ENCODE measurements at regions of chr10 and their contacts with region 1.

Region 1: DNA sequence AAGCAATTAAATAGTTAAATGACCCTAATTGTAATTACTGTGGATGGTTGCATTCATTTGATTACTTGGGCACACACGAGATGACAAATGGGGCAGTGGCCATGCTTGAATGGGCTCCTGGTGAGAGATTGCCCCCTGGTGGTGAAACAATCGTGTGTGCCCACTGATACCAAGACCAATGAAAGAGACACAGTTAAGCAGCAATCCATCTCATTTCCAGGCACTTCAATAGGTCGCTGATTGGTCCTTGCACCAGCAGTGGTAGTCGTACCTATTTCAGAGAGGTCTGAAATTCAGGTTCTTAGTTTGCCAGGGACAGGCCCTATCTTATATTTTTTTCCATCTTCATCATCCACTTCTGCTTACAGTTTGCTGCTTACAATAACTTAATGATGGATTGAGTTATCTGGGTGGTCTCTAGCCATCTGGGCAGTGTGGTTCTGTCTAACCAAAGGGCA is 8.3 kb downstream of the PCBD1 start:
- DNase-seq: peak; percentile 86
- H3K4me3 Mint-ChIP-seq: no peak overlapping the region
- H3K27ac Mint-ChIP-seq: no peak overlapping the region
- H3K4me1 Mint-ChIP-seq: no peaks in the 10 kb centered on the region
- H3K27me3 Mint-ChIP-seq: no peaks in the 10 kb centered on the region
- CTCF ChIP-seq: peak; percentile 94

Region 2: DNA sequence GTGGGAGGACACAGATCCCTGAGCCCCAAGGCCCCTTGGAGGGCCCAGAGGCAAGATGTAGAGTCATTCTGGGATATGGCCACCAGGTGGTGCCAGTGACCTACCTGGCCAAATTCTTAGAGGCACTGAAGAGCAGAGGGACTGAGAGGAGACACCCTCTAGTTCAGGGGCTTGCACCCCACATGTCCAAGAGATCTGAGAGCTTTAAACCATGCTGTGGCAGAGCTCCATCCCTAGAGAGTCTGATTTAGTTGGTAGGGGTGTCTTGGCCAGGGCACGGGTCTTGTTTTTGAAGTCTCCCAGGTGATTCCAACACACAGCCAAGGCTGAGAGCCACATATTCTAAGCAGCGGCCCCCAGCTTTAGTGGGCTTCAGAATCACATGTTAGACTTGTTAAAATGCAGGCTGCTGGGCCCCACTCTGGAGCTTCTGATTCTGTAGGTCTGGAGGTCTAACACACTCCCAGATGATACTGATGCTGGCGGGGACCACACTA is 330.1 kb before region 1 on chr10:
- CTCF ChIA-PET with region 1: no interaction called
- intact Hi-C with region 1: loop called (anchors 2 kb)
- DNase-seq: peak; percentile 81
- H3K4me3 Mint-ChIP-seq: no peak overlapping the region
- H3K27ac Mint-ChIP-seq: no peak overlapping the region
- H3K4me1 Mint-ChIP-seq: no peaks in the 10 kb centered on the region
- H3K27me3 Mint-ChIP-seq: peaks cover 31% of the 10 kb centered on the region
- CTCF ChIP-seq: peak; percentile 92

Region 3: DNA sequence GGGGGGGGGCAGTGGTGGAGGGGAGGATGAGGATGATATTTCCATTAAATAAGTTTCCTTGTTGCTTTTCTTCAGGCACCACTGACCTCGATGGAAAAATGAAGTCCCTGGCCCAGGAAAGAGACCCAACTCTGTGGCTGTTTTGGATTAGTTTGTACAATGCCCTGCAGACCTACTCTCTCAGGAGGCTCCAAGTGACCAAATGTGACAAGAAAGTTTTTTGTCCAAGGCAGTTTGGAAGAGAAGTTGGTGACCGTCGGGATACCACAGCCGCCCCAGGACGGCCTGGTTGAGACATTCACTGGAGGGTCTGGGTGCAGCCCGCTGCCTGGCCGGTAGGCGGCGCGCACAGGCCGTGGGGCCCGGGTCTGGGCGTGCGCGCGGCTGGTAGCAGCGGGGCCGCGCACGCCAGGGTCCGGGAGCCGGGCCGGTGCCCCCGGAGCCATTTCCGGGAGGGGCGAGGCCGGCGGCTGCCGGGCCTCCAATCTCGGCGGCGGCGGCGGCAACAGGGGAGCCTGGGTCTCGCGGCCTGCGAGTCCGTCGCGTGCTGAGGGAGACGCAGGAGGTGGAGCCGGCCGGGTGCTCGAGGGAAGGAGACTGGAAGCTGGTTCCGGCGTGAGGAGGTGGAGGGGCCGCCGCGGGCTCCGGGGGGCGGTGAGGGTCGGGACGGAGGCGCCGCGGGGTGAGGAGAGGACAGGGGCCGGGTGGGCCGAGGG is 64.4 kb before region 1 on chr10 and contains the start of gene SGPL1:
- CTCF ChIA-PET with region 1: no interaction called
- intact Hi-C with region 1: loop called (anchors 1 kb)
- DNase-seq: peak; percentile 96
- H3K4me3 Mint-ChIP-seq: peak within 1 kb of the TSS; percentile 84
- H3K27ac Mint-ChIP-seq: peak within 1 kb of the TSS; percentile 75
- H3K4me1 Mint-ChIP-seq: peaks cover 8% of the 10 kb centered on the region
- H3K27me3 Mint-ChIP-seq: peaks cover 27% of the 10 kb centered on the region
- CTCF ChIP-seq: peak; percentile 99
- total RNA-seq, gene SGPL1: 75.8 and 84.6 TPM in 2 replicates

Region 4: DNA sequence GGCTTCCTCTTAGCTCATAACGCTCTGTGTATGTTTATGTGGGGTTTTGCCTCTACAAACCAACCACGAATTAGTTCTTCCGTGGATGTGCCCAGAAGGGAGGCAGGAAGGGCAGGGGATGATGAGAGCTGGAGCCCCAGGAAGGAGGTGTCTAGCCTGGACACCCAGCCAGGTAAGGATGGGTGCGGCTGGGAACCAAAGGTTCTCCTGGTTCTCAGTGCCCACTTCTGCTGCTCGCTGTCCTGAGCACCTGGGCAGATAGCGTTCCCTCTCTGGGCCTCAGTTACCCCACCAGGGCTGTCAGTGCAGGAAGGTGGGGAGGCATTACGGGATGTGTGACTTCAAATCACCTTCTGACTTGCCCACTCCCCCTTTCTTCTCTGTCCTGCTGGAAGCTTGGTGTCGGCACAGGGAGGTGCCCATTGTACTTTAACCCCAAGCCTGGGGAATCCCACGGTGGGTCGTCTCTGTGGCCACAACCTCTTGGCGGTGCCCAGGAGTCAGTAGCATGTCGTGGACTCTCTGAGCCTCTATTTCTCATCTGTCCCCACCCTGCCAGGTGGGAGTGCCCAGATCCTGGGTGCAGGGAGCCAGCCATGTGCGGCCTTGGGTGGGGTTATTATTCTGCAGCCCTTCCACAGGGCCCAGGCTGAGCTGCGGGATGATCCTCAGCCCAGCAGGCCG is 27.0 kb after region 1 on chr10:
- CTCF ChIA-PET with region 1: no interaction called
- intact Hi-C with region 1: no loop called
- DNase-seq: no peak
- H3K4me3 Mint-ChIP-seq: no peak overlapping the region
- H3K27ac Mint-ChIP-seq: no peak overlapping the region
- H3K4me1 Mint-ChIP-seq: peaks cover 7% of the 10 kb centered on the region
- H3K27me3 Mint-ChIP-seq: peaks cover 85% of the 10 kb centered on the region
- CTCF ChIP-seq: no peak